ENCODE measurements at regions of chr7 and their contacts with region 1.

Region 1: GRCh38 chr7:42690794-42691639 is 220.9 kb downstream of the C7orf25 start:
- DNase-seq: no peak
- ATAC-seq: peak; percentile 21
- H3K4me3 ChIP-seq: no peak overlapping the region
- H3K27ac ChIP-seq: no peak overlapping the region
- H3K4me1 ChIP-seq: peaks cover 0 to 4% of the 10 kb centered on the region in 2 donors
- H3K27me3 ChIP-seq: no peaks in the 10 kb centered on the region

Region 2: GRCh38 chr7:41940760-41941343 is 750.2 kb before region 1 on chr7:
- intact Hi-C with region 1: loop called in 1 of 2 experiments (anchors 10 kb)
- DNase-seq: peak; percentile 71 to 85
- ATAC-seq: peak; percentile 89
- H3K4me3 ChIP-seq: no peak overlapping the region
- H3K27ac ChIP-seq: no peak overlapping the region
- H3K4me1 ChIP-seq: no peaks in the 10 kb centered on the region
- H3K27me3 ChIP-seq: no peaks in the 10 kb centered on the region

Region 3: DNA sequence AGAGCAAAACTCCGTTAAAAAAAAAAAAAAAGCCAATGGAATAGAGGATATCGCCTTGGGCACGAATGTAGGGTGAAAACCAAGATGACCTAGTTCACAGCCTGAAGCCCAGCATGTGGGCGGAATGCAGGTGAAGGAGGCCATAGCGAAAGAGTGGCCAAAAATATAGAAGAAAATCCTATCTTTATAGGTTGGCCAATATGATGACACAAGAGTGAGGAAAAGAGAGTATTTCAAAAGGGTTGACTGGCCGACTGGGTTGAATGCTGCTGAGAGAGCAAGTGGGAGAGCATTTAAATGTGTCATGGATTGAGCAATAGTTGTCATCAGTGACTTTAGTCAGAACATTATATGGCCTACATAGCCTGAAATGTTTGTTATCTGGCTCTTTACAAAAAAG is 436.8 kb before region 1 on chr7:
- intact Hi-C with region 1: loop called in 1 of 2 experiments (anchors 5 kb)
- DNase-seq: no peak
- ATAC-seq: peak; percentile 46
- H3K4me3 ChIP-seq: no peak overlapping the region
- H3K27ac ChIP-seq: no peak overlapping the region
- H3K4me1 ChIP-seq: no peaks in the 10 kb centered on the region
- H3K27me3 ChIP-seq: no peaks in the 10 kb centered on the region

Region 4: DNA sequence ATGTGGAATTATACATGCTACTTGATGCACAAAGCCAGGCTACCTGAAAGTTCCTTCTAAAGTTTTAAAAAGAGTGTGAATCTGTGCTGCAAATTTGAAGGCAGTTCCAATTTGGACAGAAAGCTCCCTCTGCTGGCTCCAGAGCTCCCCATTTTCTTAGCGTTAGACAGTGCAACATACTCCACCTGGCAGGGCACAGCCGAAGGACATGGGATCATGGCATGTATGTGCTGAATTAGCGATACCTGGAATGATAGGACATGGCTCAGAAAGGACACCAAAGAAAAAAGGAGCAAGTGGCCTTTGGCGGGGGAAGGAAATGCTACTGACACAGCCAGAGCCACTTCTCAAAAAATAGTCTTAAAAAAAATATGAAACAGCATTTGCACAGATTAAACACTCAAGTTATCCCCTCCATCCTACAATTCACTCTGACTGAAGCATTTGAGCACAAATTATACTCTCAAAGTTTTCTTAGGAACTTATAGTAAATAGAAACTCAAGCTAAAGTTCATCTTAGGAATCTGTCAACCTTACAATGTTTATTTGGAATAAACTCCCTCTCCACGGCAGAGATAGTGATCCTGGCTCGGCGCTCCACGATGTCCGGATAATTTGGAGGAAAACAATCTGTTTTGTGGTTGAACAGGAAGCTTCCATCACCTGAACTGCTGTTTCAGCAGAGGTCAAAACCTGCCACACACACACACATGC is 140.9 kb after region 1 on chr7:
- intact Hi-C with region 1: loop called in 1 of 2 experiments (anchors 10 kb)
- DNase-seq: peak; percentile 50 to 71
- ATAC-seq: peak; percentile 72
- H3K4me3 ChIP-seq: no peak overlapping the region
- H3K27ac ChIP-seq: no peak overlapping the region
- H3K4me1 ChIP-seq: no peaks in the 10 kb centered on the region
- H3K27me3 ChIP-seq: no peaks in the 10 kb centered on the region